GM18951 (cell line): ENCODE measurements at regions of chr2 and their contacts with region 1.

Region 1: GRCh38 chr2:182980115-182980514 is 58.1 kb downstream of the NCKAP1 start:
- POLR2A ChIP-seq: no peak

Region 2: DNA sequence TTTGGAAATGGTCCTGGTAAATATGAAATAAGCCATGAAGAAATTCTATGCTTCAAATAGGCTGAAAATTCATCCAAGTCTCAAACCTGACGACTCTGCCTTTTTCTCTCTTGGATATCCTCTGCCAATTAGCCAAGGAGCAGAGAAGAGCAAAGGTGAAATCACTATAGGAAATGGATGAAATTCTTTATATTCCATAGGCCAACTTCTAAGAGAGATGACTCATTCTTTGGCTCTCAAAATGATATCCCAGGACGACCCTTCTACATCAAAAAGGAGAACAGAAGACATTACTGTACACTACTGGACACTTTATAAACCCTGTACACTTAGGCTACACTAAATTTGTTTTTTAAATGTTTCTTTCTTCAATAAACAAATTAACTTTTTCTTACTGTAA is 576.0 kb before region 1 on chr2:
- in situ Hi-C with region 1: no loop called
- POLR2A ChIP-seq: no peak

Region 3: GRCh38 chr2:182672471-182673165 is 307.5 kb before region 1 on chr2:
- in situ Hi-C with region 1: loop called (anchors 10 kb)
- POLR2A ChIP-seq: no peak

Region 4: GRCh38 chr2:182779323-182779722 is 200.8 kb before region 1 on chr2:
- in situ Hi-C with region 1: loop called (anchors 10 kb)
- POLR2A ChIP-seq: no peak

Region 5: GRCh38 chr2:183089192-183089851 is 109.2 kb after region 1 on chr2:
- in situ Hi-C with region 1: no loop called
- POLR2A ChIP-seq: no peak